ENCODE measurements at regions of chr5 and their contacts with region 1.

Region 1: GRCh38 chr5:149497357-149497756 is 53.9 kb downstream of the CSNK1A1 start:
- DNase-seq: peak; percentile 98
- ATAC-seq: peak; percentile 93
- H3K4me3 ChIP-seq: no peak overlapping the region
- H3K27ac ChIP-seq: peak overlapping the region; percentile 75
- H3K4me1 ChIP-seq: peaks cover 68% of the 10 kb centered on the region
- H3K27me3 ChIP-seq: no peaks in the 10 kb centered on the region
- CTCF ChIP-seq: no peak

Region 2: DNA sequence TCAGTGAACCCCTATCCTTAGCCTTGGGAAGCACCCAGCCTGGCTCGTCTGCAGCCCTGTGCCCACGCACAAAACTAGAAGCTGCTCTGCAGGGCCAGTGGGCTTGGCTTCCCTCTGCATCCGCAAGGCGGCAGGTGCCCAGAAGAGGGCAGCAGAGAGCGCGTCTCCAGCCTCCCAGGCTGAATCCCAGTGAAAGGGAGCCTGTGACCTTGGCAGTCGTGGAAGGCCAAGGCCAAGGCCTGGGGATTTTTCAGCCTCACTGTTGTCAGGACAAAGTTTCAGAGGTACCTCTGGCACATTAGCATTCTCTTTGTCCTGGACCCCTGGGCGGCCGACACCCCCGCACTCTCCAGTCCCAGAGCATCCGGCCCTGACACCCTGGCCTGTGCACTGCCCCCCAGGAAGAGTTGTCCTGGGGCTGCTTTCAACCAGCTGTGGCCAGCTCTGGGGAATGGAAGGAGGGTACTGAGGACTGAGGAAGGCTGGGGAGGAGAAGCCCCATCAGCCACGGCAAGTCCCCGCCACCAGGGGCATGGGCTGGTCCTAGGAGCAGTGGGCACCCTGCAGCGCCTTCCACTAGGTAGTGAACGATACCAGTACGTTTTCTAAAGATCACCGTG is 54.7 kb before region 1 on chr5:
- CTCF ChIA-PET with region 1: interaction called, 12 read pairs
- POLR2A ChIA-PET with region 1: interaction called, 4 read pairs
- intact Hi-C with region 1: loop called (anchors 1 kb)
- DNase-seq: peak; percentile 95
- ATAC-seq: peak; percentile 51
- H3K4me3 ChIP-seq: no peak overlapping the region
- H3K27ac ChIP-seq: peak overlapping the region; percentile 28
- H3K4me1 ChIP-seq: peaks cover 49% of the 10 kb centered on the region
- H3K27me3 ChIP-seq: no peaks in the 10 kb centered on the region
- CTCF ChIP-seq: peak; percentile 99

Region 3: GRCh38 chr5:149517461-149518122 is 20.2 kb after region 1 on chr5:
- CTCF ChIA-PET with region 1: no interaction called
- POLR2A ChIA-PET with region 1: interaction called, 12 read pairs
- intact Hi-C with region 1: loop called (anchors 2 kb)
- DNase-seq: no peak
- ATAC-seq: no peak
- H3K4me3 ChIP-seq: no peak overlapping the region
- H3K27ac ChIP-seq: no peak overlapping the region
- H3K4me1 ChIP-seq: peaks cover 31% of the 10 kb centered on the region
- H3K27me3 ChIP-seq: no peaks in the 10 kb centered on the region
- CTCF ChIP-seq: no peak

Region 4: GRCh38 chr5:149551200-149552037 is 54.1 kb after region 1 on chr5 and contains the start of gene CSNK1A1:
- CTCF ChIA-PET with region 1: no interaction called
- POLR2A ChIA-PET with region 1: interaction called, 5 read pairs
- intact Hi-C with region 1: loop called (anchors 1 kb)
- DNase-seq: peak; percentile 100
- ATAC-seq: peak; percentile 89
- H3K4me3 ChIP-seq: peak within 1 kb of the TSS; percentile 93
- H3K27ac ChIP-seq: peak within 1 kb of the TSS; percentile 85
- H3K4me1 ChIP-seq: peaks cover 36% of the 10 kb centered on the region
- H3K27me3 ChIP-seq: no peaks in the 10 kb centered on the region
- CTCF ChIP-seq: peak; percentile 98
- total RNA-seq, gene CSNK1A1: 500 and 586 TPM in 2 replicates